ENCODE measurements at regions of chr5 and their contacts with region 1.

Region 1: GRCh38 chr5:217860-218456 is at the starts of genes CCDC127 and SDHA:
- DNase-seq: peak; percentile 91
- H3K4me3 Mint-ChIP-seq: peak within 1 kb of the TSS; percentile 84
- H3K27ac Mint-ChIP-seq: peak within 1 kb of the TSS; percentile 77
- H3K4me1 Mint-ChIP-seq: peaks cover 17% of the 10 kb centered on the region
- H3K27me3 Mint-ChIP-seq: no peaks in the 10 kb centered on the region
- CTCF ChIP-seq: peak; percentile 20
- total RNA-seq, gene CCDC127: 4.5 and 5.8 TPM in 2 replicates
- total RNA-seq, gene SDHA: 73.4 and 75.0 TPM in 2 replicates

Region 2: GRCh38 chr5:188488-189481 is 29.2 kb before region 1 on chr5:
- CTCF ChIA-PET with region 1: interaction called, 4 read pairs
- POLR2A ChIA-PET with region 1: interaction called, 10 read pairs
- intact Hi-C with region 1: loop called (anchors 2 kb)
- DNase-seq: peak; percentile 87
- H3K4me3 Mint-ChIP-seq: peak overlapping the region; percentile 11
- H3K27ac Mint-ChIP-seq: no peak overlapping the region
- H3K4me1 Mint-ChIP-seq: no peaks in the 10 kb centered on the region
- H3K27me3 Mint-ChIP-seq: peaks cover 12% of the 10 kb centered on the region
- CTCF ChIP-seq: peak; percentile 92

Region 3: GRCh38 chr5:270340-270739 is 52.4 kb after region 1 on chr5:
- CTCF ChIA-PET with region 1: interaction called, 3 read pairs
- POLR2A ChIA-PET with region 1: interaction called, 29 read pairs
- intact Hi-C with region 1: no loop called
- DNase-seq: no peak
- H3K4me3 Mint-ChIP-seq: peak overlapping the region; percentile 78
- H3K27ac Mint-ChIP-seq: peak overlapping the region; percentile 23
- H3K4me1 Mint-ChIP-seq: peaks cover 16% of the 10 kb centered on the region
- H3K27me3 Mint-ChIP-seq: no peaks in the 10 kb centered on the region
- CTCF ChIP-seq: no peak

Region 4: DNA sequence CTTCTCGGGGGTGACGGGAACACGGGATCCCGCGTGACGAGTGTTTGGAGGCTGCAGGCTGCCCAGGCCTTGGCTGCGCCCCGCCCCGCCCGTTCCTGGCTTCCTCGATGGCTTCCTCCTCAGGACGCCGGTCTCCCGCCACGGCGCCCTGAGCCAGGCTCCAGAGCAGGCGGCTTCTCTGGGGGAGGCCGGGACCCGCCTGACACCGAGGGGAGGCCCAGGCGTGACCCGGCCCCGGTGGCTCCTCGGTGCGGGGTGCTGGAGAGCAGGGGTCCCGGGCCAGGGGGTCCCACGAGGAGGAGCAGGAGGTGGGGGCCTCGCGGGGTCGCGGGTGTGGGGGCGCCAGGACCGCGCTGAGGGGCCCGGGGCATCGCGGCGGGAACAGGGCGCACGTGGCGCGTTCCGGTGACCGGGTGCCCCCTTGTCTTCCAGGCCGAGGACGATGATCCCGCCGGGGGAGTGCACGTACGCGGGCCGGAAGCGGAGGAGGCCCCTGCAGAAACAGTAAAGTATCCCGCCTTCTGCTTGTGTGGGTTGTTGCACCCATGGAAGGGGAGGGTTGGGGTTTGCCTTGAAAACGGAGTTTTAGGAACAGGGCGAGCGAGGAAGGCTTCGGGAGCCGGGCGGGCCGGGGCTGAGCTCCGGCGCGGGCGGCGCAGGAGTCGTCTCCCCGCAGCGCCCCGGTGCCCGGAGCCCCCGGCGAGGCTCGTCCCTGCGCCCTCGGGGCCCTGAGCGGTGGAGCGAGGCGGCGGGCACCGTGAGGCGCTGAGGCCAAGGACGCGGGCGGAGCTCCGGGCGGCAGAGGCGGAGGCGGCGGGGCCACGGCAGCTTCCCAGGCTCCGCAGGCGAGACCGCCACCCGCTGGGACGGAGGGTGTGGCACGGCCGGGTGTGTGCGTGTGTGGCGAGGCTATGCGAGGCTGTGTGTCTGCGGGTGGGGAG is 125.8 kb after region 1 on chr5:
- CTCF ChIA-PET with region 1: no interaction called
- POLR2A ChIA-PET with region 1: no interaction called
- intact Hi-C with region 1: no loop called
- DNase-seq: peak; percentile 63
- H3K4me3 Mint-ChIP-seq: peak overlapping the region; percentile 31
- H3K27ac Mint-ChIP-seq: no peak overlapping the region
- H3K4me1 Mint-ChIP-seq: no peaks in the 10 kb centered on the region
- H3K27me3 Mint-ChIP-seq: no peaks in the 10 kb centered on the region
- CTCF ChIP-seq: no peak

Measured in MCF 10A (cell line).